ENCODE measurements at regions of chr14 and their contacts with region 1.

Region 1: DNA sequence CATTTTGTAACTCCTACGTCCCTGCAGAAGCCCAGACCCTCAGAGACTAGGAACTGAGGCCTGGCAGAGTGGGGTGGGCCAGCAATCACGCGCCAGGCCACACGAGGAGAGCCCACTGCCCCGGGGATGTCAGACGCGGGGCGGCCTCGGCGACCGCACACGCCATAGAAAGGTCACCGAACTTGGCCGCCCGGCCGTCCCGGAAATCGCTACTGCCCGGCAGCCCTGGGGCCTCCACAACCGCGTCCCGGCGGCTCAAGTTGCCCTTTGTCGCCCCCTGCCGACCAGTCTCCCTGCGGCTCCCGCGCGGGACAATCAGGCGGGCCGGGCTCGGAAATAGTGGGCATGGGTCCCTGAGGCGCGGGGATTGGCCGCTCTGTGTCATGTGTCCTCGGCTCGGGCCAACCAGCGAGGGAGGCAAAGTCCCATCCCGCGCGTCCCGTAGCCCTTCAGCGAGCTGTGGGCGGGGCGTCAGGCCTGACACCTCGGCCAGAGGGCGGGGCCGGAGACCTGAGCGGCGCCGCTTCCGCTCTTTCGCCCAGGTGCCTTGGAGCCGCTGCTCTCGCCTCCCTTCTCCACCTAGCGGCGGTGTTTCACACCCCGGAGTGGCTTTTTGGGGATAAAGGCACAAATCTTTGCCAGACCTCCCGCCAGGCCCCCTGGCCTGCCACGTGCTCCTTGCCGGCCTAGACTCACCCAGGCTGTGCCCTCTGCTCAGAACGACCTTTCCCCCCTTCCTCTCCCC is 33.4 kb upstream of the DEGS2 start:
- DNase-seq: peak; percentile 97 to 100
- H3K4me3 ChIP-seq: peak overlapping the region; percentile 54 to 68
- H3K27ac ChIP-seq: peak overlapping the region; percentile 84 to 94
- H3K4me1 ChIP-seq: peaks cover 0 to 9% of the 10 kb centered on the region in 2 donors
- H3K27me3 ChIP-seq: no peaks in the 10 kb centered on the region
- CTCF ChIP-seq: peak; percentile 79 to 90 (median 81)

Region 2: GRCh38 chr14:99480917-99481744 is 711.7 kb before region 1 on chr14 and contains the start of gene CCNK:
- intact Hi-C with region 1: loop called (anchors 2 kb)
- DNase-seq: peak; percentile 100
- H3K4me3 ChIP-seq: peak within 1 kb of the TSS; percentile 87 to 95
- H3K27ac ChIP-seq: peak within 1 kb of the TSS; percentile 96 to 98
- H3K4me1 ChIP-seq: peaks cover 6 to 34% of the 10 kb centered on the region in 2 donors
- H3K27me3 ChIP-seq: no peaks in the 10 kb centered on the region
- CTCF ChIP-seq: no peak
- total RNA-seq, gene CCNK: 21.9 TPM

Region 3: DNA sequence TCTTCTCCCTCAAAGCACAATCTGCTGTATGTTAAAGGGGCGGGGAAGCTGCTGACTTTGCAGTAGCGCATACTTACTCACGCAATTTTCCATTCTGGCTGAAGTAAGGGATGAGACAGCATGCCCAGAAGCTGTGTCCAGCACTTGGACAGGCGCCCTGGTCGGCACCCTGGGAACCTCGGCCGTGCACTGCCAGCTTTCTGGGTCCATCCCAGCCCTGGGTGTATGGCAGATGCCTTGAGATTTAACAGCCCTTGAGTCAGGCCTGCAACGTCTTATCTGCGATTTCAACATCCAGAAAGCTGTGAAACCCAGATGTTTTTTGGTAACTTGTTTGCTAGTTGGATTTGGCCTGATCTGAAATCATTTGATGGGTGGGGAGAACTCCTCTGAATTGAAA is 383.5 kb before region 1 on chr14:
- intact Hi-C with region 1: no loop called
- DNase-seq: peak in 1 of 2 donors; percentile 79
- H3K4me3 ChIP-seq: no peak overlapping the region
- H3K27ac ChIP-seq: peak overlapping the region in 1 of 2 donors; percentile 6
- H3K4me1 ChIP-seq: no peaks in the 10 kb centered on the region
- H3K27me3 ChIP-seq: no peaks in the 10 kb centered on the region
- CTCF ChIP-seq: no peak

Region 4: GRCh38 chr14:99982537-99983250 is 210.2 kb before region 1 on chr14:
- intact Hi-C with region 1: loop called (anchors 1 kb)
- DNase-seq: peak in 1 of 2 donors; percentile 69
- H3K4me3 ChIP-seq: no peak overlapping the region
- H3K27ac ChIP-seq: no peak overlapping the region
- H3K4me1 ChIP-seq: no peaks in the 10 kb centered on the region
- H3K27me3 ChIP-seq: no peaks in the 10 kb centered on the region
- CTCF ChIP-seq: peak; percentile 71 to 86 (median 85)

Region 5: GRCh38 chr14:100213956-100214774 is 21.3 kb after region 1 on chr14:
- intact Hi-C with region 1: loop called (anchors 1 kb)
- DNase-seq: peak in 1 of 2 donors; percentile 91
- H3K4me3 ChIP-seq: peak overlapping the region; percentile 82 to 83
- H3K27ac ChIP-seq: peak overlapping the region; percentile 92 to 97
- H3K4me1 ChIP-seq: peaks cover 0 to 10% of the 10 kb centered on the region in 2 donors
- H3K27me3 ChIP-seq: no peaks in the 10 kb centered on the region
- CTCF ChIP-seq: no peak

Region 6: GRCh38 chr14:100306420-100307219 is 113.8 kb after region 1 on chr14 and contains the start of gene SLC25A29:
- intact Hi-C with region 1: loop called (anchors 2 kb)
- DNase-seq: peak; percentile 54 to 95
- H3K4me3 ChIP-seq: peak within 1 kb of the TSS; percentile 90 to 95
- H3K27ac ChIP-seq: peak within 1 kb of the TSS; percentile 74 to 83
- H3K4me1 ChIP-seq: peaks cover 3 to 12% of the 10 kb centered on the region in 2 donors
- H3K27me3 ChIP-seq: no peaks in the 10 kb centered on the region
- CTCF ChIP-seq: no peak
- total RNA-seq, gene SLC25A29: 193 TPM